CD4-positive, alpha-beta memory T cell (primary cell): ENCODE measurements at regions of chr14 and their contacts with region 1.

Region 1: GRCh38 chr14:20413045-20413799 is at the start of gene TEP1:
- DNase-seq: peak; percentile 56 to 75 (median 65)
- H3K4me3 ChIP-seq: peak within 1 kb of the TSS; percentile 73 to 79
- H3K4me3 Mint-ChIP-seq: peak within 1 kb of the TSS; percentile 92 to 100 (median 99)
- H3K27ac ChIP-seq: peak within 1 kb of the TSS; percentile 85
- H3K27ac Mint-ChIP-seq: peak within 1 kb of the TSS; percentile 91 to 99 (median 96)
- H3K4me1 ChIP-seq: peaks cover 38% of the 10 kb centered on the region
- H3K4me1 Mint-ChIP-seq: peaks cover 32 to 52% (median 41%) of the 10 kb centered on the region in 4 donors
- H3K27me3 ChIP-seq: no peaks in the 10 kb centered on the region
- H3K27me3 Mint-ChIP-seq: no peaks in the 10 kb centered on the region
- total RNA-seq, gene TEP1: 66.7 to 67.3 TPM

Region 2: GRCh38 chr14:20327005-20327869 is 86.0 kb before region 1 on chr14:
- CTCF ChIA-PET with region 1: interaction called, 50 read pairs
- POLR2A ChIA-PET with region 1: interaction called, 8 read pairs
- intact Hi-C with region 1: loop called (anchors 1 kb)
- DNase-seq: peak in 4 of 5 donors; percentile 65 to 68 (median 66)
- H3K4me3 ChIP-seq: no peak overlapping the region
- H3K4me3 Mint-ChIP-seq: peak overlapping the region in 3 of 8 donors; percentile 17 to 50 (median 45)
- H3K27ac ChIP-seq: peak overlapping the region; percentile 17
- H3K27ac Mint-ChIP-seq: peak overlapping the region; percentile 24 to 92 (median 77)
- H3K4me1 ChIP-seq: peaks cover 10% of the 10 kb centered on the region
- H3K4me1 Mint-ChIP-seq: peaks cover 15 to 35% (median 22%) of the 10 kb centered on the region in 4 donors
- H3K27me3 ChIP-seq: no peaks in the 10 kb centered on the region
- H3K27me3 Mint-ChIP-seq: no peaks in the 10 kb centered on the region

Region 3: DNA sequence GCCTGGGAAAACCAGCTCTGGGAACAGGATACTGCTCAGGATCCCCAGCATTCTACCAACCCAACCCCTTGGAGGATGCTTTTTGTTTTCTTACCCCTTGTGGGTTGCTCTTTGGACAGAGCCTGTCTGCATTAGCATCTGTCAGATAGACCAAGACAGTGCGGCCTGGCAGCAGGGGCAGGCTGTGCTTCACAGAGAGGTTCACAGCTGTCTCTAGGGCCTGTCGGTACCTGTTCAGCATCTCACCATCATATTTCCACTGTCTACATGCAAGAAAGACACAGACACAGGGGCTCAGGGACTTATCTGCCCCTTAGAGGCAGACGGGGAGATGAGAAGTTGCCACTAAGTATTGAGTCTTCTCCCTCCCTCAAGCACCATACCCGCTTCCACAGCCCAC is 21.7 kb before region 1 on chr14:
- CTCF ChIA-PET with region 1: interaction called, 10 read pairs
- POLR2A ChIA-PET with region 1: interaction called, 3 read pairs
- intact Hi-C with region 1: no loop called
- DNase-seq: no peak
- H3K4me3 ChIP-seq: no peak overlapping the region
- H3K4me3 Mint-ChIP-seq: no peak overlapping the region
- H3K27ac ChIP-seq: no peak overlapping the region
- H3K27ac Mint-ChIP-seq: no peak overlapping the region
- H3K4me1 ChIP-seq: no peaks in the 10 kb centered on the region
- H3K4me1 Mint-ChIP-seq: no peaks in the 10 kb centered on the region
- H3K27me3 ChIP-seq: no peaks in the 10 kb centered on the region
- H3K27me3 Mint-ChIP-seq: no peaks in the 10 kb centered on the region

Region 4: DNA sequence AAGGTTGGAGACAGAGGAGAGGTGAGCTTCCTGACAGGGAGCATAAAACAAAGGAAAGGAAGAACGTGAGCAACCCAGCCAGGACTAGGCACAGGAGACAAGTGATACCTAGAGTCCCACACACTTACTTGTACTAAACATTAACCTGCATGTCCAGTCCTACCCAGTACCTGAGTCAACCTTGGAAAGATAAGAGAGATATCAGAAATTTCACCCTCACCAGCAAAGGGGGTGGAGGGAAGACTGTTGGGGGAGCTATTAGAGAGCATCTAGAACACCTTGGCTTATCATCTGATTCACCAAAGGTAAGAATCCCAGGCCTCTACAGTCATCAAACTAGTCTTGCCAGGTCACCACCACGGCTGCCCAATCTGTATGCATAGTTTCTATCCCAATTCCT is 11.6 kb after region 1 on chr14:
- CTCF ChIA-PET with region 1: interaction called, 34 read pairs
- POLR2A ChIA-PET with region 1: no interaction called
- intact Hi-C with region 1: no loop called
- DNase-seq: no peak
- H3K4me3 ChIP-seq: no peak overlapping the region
- H3K4me3 Mint-ChIP-seq: no peak overlapping the region
- H3K27ac ChIP-seq: no peak overlapping the region
- H3K27ac Mint-ChIP-seq: no peak overlapping the region
- H3K4me1 ChIP-seq: peaks cover 5% of the 10 kb centered on the region
- H3K4me1 Mint-ChIP-seq: peaks cover 10 to 16% (median 13%) of the 10 kb centered on the region in 4 donors
- H3K27me3 ChIP-seq: no peaks in the 10 kb centered on the region
- H3K27me3 Mint-ChIP-seq: peaks cover 1 to 2% of the 10 kb centered on the region in 2 donors

Region 5: DNA sequence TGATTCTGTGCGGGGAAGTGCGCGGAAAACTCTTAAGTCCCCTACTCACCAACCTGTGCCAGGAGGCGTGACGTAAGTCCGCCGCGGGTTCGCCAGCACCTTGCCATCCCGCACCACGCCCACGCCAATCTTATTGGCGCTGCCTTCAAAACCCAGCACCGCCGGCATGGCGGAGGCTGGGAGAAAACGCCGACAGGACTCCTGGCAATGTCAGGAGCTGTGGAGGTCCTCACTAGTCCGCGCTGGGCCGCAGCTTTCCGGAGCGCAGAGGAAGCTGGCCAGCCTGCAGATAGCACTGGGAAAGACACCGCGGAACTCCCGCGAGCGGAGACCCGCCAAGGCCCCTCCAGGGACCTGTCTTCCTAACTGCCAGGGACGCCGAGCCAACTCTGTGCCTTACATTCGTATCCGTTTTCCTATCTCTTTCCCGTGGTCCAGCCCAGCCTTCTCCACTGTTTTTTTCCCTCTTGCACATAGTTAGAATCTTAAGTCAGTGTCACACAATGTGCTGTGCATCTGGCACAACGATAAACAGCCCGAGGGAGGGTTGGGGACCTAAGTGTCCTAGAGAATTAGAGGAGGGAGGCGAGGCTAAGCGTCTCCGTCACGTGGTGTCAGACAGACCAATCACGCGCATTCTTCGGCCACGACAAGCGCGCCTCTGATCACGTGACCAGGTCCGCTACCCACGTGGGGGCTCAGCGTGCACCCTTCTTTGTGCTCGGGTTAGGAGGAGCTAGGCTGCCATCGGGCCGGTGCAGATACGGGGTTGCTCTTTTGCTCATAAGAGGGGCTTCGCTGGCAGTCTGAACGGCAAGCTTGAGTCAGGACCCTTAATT is 41.5 kb after region 1 on chr14 and contains the starts of genes APEX1 and OSGEP:
- CTCF ChIA-PET with region 1: interaction called, 15 read pairs
- POLR2A ChIA-PET with region 1: interaction called, 33 read pairs
- intact Hi-C with region 1: loop called (anchors 1 kb)
- DNase-seq: peak; percentile 96 to 99 (median 98)
- H3K4me3 ChIP-seq: peak within 1 kb of the TSS; percentile 70 to 99
- H3K4me3 Mint-ChIP-seq: peak within 1 kb of the TSS in 2 of 8 donors; percentile 13 to 23
- H3K27ac ChIP-seq: peak within 1 kb of the TSS; percentile 89
- H3K27ac Mint-ChIP-seq: peak within 1 kb of the TSS in 2 of 7 donors; percentile 19 to 55
- H3K4me1 ChIP-seq: peaks cover 53% of the 10 kb centered on the region
- H3K4me1 Mint-ChIP-seq: peaks cover 5 to 21% (median 12%) of the 10 kb centered on the region in 4 donors
- H3K27me3 ChIP-seq: no peaks in the 10 kb centered on the region
- H3K27me3 Mint-ChIP-seq: no peaks in the 10 kb centered on the region
- total RNA-seq, gene APEX1: 102 to 105 TPM
- total RNA-seq, gene OSGEP: 72.3 to 75.9 TPM

Region 6: GRCh38 chr14:20469242-20469889 is 56.1 kb after region 1 on chr14 and contains the start of gene PNP:
- CTCF ChIA-PET with region 1: interaction called, 7 read pairs
- POLR2A ChIA-PET with region 1: interaction called, 18 read pairs
- intact Hi-C with region 1: no loop called
- DNase-seq: peak; percentile 84 to 92 (median 88)
- H3K4me3 ChIP-seq: peak within 1 kb of the TSS; percentile 84 to 92
- H3K4me3 Mint-ChIP-seq: peak within 1 kb of the TSS; percentile 97 to 100 (median 99)
- H3K27ac ChIP-seq: peak within 1 kb of the TSS; percentile 77
- H3K27ac Mint-ChIP-seq: peak within 1 kb of the TSS; percentile 94 to 99 (median 98)
- H3K4me1 ChIP-seq: peaks cover 47% of the 10 kb centered on the region
- H3K4me1 Mint-ChIP-seq: peaks cover 33 to 55% (median 43%) of the 10 kb centered on the region in 4 donors
- H3K27me3 ChIP-seq: no peaks in the 10 kb centered on the region
- H3K27me3 Mint-ChIP-seq: no peaks in the 10 kb centered on the region
- total RNA-seq, gene PNP: 106 to 108 TPM

Region 7: DNA sequence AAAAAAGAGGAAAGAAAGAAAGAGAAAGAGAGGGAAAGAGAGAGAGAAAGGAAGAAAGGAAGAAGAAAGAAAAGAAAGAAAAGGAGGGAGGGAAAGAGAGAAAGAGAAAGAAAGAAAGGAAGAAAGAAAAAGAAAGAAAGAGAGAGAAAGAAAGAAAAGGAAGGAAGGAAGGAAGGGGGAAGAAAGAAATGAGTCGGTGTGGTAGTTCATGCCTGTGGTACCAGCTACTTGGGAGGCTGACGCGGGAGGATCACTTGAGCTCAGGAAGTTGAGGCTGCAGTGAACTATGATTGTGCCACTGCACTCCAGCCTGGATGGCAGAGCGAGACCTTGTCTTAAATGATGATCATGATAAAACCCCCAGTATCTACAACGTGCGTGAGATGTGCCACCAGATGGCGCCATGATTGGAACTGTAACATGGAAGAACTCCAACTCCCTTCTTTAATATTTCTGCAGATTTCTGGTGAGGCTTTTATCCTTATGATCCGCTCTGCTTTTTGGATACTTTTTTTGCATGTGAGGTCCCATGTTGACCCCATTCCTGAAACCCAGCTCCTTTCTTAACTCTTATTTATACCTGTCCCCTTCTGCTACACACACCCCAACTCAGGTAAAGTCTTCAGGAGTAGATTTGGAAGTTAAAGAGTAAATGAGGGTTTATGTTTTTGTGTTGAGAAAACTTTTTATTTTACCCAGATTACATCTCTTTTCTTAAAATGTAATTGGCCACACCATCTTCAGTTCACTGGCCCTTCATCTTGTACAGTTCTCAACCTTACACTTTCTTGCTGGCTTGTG is 117.7 kb after region 1 on chr14:
- CTCF ChIA-PET with region 1: interaction called, 17 read pairs
- POLR2A ChIA-PET with region 1: no interaction called
- intact Hi-C with region 1: loop called (anchors 2 kb)
- DNase-seq: peak; percentile 52 to 68 (median 54)
- H3K4me3 ChIP-seq: no peak overlapping the region
- H3K4me3 Mint-ChIP-seq: peak overlapping the region in 6 of 8 donors; percentile 10 to 70 (median 60)
- H3K27ac ChIP-seq: no peak overlapping the region
- H3K27ac Mint-ChIP-seq: peak overlapping the region in 2 of 7 donors; percentile 52 to 59
- H3K4me1 ChIP-seq: no peaks in the 10 kb centered on the region
- H3K4me1 Mint-ChIP-seq: peaks cover 4 to 8% (median 7%) of the 10 kb centered on the region in 4 donors
- H3K27me3 ChIP-seq: no peaks in the 10 kb centered on the region
- H3K27me3 Mint-ChIP-seq: peaks cover 0 to 5% of the 10 kb centered on the region in 2 donors